Heart left ventricle (tissue), 16 donors: ENCODE measurements at regions of chr17 and their contacts with region 1.

Region 1: DNA sequence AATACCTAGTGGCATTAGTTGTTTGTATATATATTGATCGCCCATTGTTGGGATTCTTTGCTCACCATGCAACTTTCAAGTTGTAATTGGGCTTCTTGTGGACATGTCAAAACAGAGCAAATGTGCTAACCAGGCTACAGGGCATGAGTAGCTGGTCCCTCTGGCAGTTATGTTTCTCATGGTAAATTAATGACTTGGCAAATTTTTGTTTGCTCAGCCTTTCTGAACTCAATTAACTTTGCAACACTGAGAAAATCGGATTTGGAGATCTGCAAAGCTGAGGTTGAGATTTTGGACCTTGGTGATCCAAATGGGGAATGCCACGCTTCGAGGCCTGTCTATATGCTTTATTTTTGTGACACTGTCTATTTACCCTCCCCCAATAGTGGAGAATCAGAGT is 138.5 kb upstream of the PIRT start:
- DNase-seq: no peak
- ATAC-seq: no peak
- H3K4me3 ChIP-seq: no peak overlapping the region
- H3K27ac ChIP-seq: no peak overlapping the region
- H3K4me1 ChIP-seq: no peaks in the 10 kb centered on the region
- H3K27me3 ChIP-seq: no peaks in the 10 kb centered on the region
- CTCF ChIP-seq: no peak
- POLR2A ChIP-seq: no peak

Region 2: DNA sequence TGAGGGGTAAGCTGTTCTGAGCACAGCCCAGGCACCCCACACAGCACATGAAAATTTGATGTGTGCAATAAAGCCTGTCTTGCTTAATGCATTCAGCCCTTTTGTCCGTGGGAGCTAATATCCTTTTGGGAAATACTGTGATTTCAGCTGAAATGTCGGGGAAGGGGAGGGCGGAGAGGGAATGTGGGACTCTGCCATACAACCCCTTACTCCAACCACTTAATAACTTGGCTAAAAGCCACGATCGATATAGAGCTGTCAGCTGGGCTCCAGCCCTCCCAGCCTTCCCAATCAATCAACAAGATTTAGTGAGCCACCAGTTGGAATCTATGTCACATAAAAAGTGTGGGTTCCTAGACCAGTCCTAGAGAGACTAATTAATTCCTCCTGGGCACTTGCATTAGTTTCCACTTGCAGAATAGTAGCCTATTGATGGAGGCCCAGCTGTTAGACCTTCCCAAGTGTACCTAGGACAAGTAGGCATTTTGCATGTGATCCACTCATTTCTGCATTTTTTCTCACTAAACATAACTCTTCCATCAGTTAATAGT is 55.8 kb before region 1 on chr17:
- intact Hi-C with region 1: loop called in 1 of 10 experiments (anchors 5 kb)
- DNase-seq: no peak
- ATAC-seq: no peak
- H3K4me3 ChIP-seq: no peak overlapping the region
- H3K27ac ChIP-seq: no peak overlapping the region
- H3K4me1 ChIP-seq: no peaks in the 10 kb centered on the region
- H3K27me3 ChIP-seq: peaks cover 0 to 4% (median 0%) of the 10 kb centered on the region in 9 donors
- CTCF ChIP-seq: no peak
- POLR2A ChIP-seq: no peak

Region 3: DNA sequence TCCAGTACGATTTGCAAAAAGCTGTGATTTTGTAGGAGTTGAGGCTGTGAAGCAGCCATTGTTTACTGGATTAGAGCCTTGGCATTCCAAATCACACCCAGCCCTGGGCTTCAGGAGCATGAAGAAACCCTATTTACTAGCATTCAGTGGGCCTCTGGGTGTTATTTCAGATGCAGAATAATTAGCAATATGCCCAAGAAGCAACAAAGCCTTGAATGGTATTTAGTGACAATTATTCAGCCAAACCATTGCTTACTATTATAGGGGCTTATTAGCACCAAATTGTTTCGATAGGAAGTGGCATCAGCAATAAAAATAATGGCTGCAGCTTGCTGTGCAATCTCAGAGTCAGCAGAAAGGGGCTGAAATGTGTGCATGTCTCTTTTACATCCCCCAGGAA is 98.0 kb after region 1 on chr17:
- intact Hi-C with region 1: no loop called
- DNase-seq: no peak
- ATAC-seq: no peak
- H3K4me3 ChIP-seq: no peak overlapping the region
- H3K27ac ChIP-seq: no peak overlapping the region
- H3K4me1 ChIP-seq: no peaks in the 10 kb centered on the region
- H3K27me3 ChIP-seq: peaks cover 0 to 4% (median 0%) of the 10 kb centered on the region in 9 donors
- CTCF ChIP-seq: no peak
- POLR2A ChIP-seq: no peak